Heart right ventricle (tissue), 16 donors: ENCODE measurements at regions of chr1 and their contacts with region 1.

Region 1: GRCh38 chr1:154863315-154864174 is 6.5 kb downstream of the KCNN3 start:
- DNase-seq: no peak
- ATAC-seq: peak in 4 of 8 donors; percentile 41 to 73 (median 46)
- H3K4me3 ChIP-seq: no peak overlapping the region
- H3K27ac ChIP-seq: no peak overlapping the region
- H3K4me1 ChIP-seq: peaks cover 6 to 57% (median 26%) of the 10 kb centered on the region in 9 donors
- H3K27me3 ChIP-seq: peaks cover 0 to 13% (median 0%) of the 10 kb centered on the region in 7 donors
- CTCF ChIP-seq: peak; percentile 28 to 65 (median 60)

Region 2: GRCh38 chr1:154772606-154773506 is 90.7 kb before region 1 on chr1:
- intact Hi-C with region 1: loop called in 3 of 10 experiments (anchors 5 to 10 kb)
- DNase-seq: no peak
- ATAC-seq: no peak
- H3K4me3 ChIP-seq: no peak overlapping the region
- H3K27ac ChIP-seq: no peak overlapping the region
- H3K4me1 ChIP-seq: peaks cover 0 to 21% (median 7%) of the 10 kb centered on the region in 9 donors
- H3K27me3 ChIP-seq: no peaks in the 10 kb centered on the region
- CTCF ChIP-seq: peak in 1 of 9 donors; percentile 27

Region 3: GRCh38 chr1:154925335-154926170 is 62.0 kb after region 1 on chr1:
- intact Hi-C with region 1: no loop called
- DNase-seq: no peak
- ATAC-seq: peak in 2 of 8 donors; percentile 12 to 13
- H3K4me3 ChIP-seq: no peak overlapping the region
- H3K27ac ChIP-seq: no peak overlapping the region
- H3K4me1 ChIP-seq: peaks cover 0 to 7% (median 0%) of the 10 kb centered on the region in 9 donors
- H3K27me3 ChIP-seq: no peaks in the 10 kb centered on the region
- CTCF ChIP-seq: no peak

Region 4: DNA sequence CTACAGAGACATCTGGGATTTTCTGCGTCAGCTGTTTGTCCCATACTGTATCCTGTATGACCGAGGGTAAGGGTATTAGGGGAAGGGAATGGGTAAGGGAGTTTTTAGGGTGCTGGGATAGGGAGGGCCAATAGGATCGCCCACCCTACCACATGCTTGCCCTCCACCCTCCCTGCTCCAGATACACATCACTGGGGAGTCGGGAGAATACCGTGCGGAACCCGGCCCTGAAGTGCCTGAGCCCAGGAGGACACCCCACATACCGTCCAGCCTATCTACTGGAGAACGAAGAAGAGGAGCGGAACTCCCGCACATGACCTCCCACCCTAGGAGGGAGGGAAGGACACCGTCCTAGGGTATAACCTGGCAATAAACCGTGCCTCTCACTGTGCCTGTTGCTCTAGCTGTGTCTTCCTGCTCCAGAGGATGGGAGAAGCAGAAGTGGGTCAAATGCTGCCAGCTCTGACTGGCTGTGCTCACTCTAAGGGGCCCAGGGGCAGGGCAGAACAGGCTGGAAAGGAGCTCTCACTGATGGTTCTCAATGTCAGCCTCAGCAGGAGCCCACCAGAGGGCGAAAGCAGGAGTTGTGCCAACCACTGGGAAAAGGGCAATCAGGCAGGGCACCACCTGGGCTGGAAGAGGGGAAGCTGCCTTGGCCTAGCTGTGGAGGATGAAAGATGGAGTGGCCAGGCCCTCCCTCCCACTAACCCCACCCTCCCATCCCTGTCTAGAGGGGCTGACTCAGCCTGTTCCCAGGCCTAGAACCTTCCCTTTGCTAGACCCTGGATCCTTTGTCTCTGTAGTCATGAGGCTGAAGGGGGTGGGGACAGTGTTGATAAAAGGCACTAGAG is 129.4 kb after region 1 on chr1:
- intact Hi-C with region 1: no loop called
- DNase-seq: no peak
- ATAC-seq: peak in 4 of 8 donors; percentile 10 to 14 (median 12)
- H3K4me3 ChIP-seq: no peak overlapping the region
- H3K27ac ChIP-seq: no peak overlapping the region
- H3K4me1 ChIP-seq: peaks cover 0 to 21% (median 0%) of the 10 kb centered on the region in 9 donors
- H3K27me3 ChIP-seq: no peaks in the 10 kb centered on the region
- CTCF ChIP-seq: no peak